Endothelial cell of umbilical vein (primary cell): ENCODE measurements at regions of chr13 and their contacts with region 1.

Region 1: DNA sequence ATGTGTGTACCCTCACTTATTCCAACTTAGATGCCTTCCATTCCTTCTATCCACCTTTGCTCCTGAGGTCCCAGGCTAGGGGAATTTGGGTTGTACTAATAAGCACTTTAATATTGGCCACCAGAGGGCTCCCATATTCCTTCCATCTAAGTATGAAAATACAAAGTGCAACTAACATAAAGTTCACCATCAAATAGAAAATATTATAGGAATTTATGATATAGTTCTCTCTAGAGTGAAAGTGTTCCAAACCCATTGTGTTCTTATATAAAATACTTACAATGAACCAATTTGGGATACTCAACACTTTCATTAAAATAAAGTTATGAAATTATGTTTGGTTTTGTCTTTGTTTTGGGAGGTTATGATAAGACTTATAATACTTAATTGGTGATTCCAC is 62.3 kb downstream of the ITGBL1 start:
- DNase-seq: peak; percentile 80
- H3K4me3 ChIP-seq: no peak overlapping the region
- H3K27ac ChIP-seq: no peak overlapping the region
- H3K4me1 ChIP-seq: peaks cover 37% of the 10 kb centered on the region
- H3K27me3 ChIP-seq: no peaks in the 10 kb centered on the region
- CTCF ChIP-seq: peak; percentile 41 to 44
- POLR2A ChIP-seq: no peak

Region 2: DNA sequence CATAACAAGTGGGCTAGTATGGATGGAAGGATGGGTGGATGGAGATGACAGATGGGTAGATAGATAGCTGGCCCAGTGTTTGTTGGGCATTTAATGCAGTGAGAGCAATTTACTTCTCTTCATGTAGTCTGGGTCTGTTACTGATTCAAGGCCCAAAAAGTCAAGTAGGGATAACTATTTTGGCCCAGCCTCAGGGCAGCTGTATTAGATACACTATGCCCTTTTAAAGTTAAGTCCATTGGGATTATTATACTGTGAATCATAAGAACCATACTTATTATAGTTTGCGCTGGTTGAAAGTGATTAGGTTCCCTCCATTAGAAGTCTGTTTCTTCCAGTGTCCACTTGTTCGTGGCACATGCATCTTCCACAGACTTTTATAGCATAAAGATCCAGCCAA is 57.6 kb before region 1 on chr13:
- CTCF ChIA-PET with region 1: no interaction called
- POLR2A ChIA-PET with region 1: no interaction called
- dilution Hi-C with region 1: no loop called
- intact Hi-C with region 1: no loop called
- DNase-seq: no peak
- H3K4me3 ChIP-seq: no peak overlapping the region
- H3K27ac ChIP-seq: no peak overlapping the region
- H3K4me1 ChIP-seq: peaks cover 40% of the 10 kb centered on the region
- H3K27me3 ChIP-seq: no peaks in the 10 kb centered on the region
- CTCF ChIP-seq: no peak
- POLR2A ChIP-seq: no peak

Region 3: DNA sequence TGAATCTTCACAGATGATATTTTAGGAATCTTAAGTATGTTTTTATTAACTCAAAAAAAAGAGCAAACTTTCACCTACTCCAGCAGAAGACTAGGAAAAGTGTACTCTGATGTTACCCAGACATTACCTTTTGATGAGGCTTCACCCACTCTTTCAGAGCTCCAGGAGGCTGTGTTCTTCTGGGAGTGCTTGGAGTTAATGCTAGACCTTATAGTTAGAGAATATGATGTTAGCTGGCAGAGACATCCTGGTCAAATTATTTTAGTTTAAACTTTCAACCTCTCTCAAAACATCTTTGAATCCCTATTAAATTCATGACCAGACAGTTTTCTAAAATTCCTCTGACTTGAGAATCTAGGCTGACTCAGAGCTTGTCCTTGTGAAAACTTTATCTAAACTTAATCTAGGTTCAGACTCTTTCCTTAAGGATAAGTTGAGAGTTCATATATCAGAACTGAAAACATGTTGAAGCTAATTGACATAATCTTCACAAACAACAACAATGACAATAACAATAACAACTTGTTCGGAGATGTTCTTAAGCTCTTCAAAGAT is 20.5 kb after region 1 on chr13:
- CTCF ChIA-PET with region 1: interaction called, 11 read pairs
- POLR2A ChIA-PET with region 1: no interaction called
- dilution Hi-C with region 1: no loop called
- intact Hi-C with region 1: no loop called
- DNase-seq: no peak
- H3K4me3 ChIP-seq: no peak overlapping the region
- H3K27ac ChIP-seq: no peak overlapping the region
- H3K4me1 ChIP-seq: peaks cover 37% of the 10 kb centered on the region
- H3K27me3 ChIP-seq: no peaks in the 10 kb centered on the region
- CTCF ChIP-seq: no peak
- POLR2A ChIP-seq: no peak

Region 4: DNA sequence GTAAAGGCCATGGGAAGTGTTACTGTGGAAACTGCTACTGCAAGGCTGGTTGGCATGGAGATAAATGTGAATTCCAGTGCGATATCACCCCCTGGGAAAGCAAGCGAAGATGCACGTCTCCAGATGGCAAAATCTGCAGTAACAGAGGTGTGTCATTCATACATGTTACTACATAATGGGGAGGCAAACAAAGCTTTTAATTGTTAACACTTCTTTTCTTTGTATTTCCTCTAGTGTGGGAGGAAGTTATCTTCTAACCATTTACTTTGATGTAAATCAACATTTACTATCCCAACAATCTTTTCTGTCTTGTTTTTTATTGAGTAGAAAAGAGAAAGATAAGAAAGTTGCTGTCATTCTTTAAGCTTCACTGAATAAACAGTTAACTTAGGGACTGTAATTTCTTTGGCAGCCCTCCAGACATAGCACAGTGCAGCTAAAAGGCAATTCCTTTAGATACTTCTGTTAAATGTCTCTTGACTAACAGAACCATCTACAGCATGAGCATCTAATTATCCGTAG is 64.6 kb after region 1 on chr13:
- CTCF ChIA-PET with region 1: interaction called, 6 read pairs
- POLR2A ChIA-PET with region 1: no interaction called
- dilution Hi-C with region 1: no loop called
- intact Hi-C with region 1: loop called (anchors 1 kb)
- DNase-seq: peak; percentile 82
- H3K4me3 ChIP-seq: no peak overlapping the region
- H3K27ac ChIP-seq: peak overlapping the region; percentile 13
- H3K4me1 ChIP-seq: peaks cover 22% of the 10 kb centered on the region
- H3K27me3 ChIP-seq: no peaks in the 10 kb centered on the region
- CTCF ChIP-seq: no peak
- POLR2A ChIP-seq: no peak

Region 5: GRCh38 chr13:101757446-101758039 is 242.8 kb after region 1 on chr13:
- CTCF ChIA-PET with region 1: interaction called, 129 read pairs
- POLR2A ChIA-PET with region 1: no interaction called
- dilution Hi-C with region 1: loop called (anchors 25 kb)
- intact Hi-C with region 1: loop called (anchors 1 kb)
- DNase-seq: peak; percentile 68
- H3K4me3 ChIP-seq: no peak overlapping the region
- H3K27ac ChIP-seq: no peak overlapping the region
- H3K4me1 ChIP-seq: no peaks in the 10 kb centered on the region
- H3K27me3 ChIP-seq: peaks cover 0 to 3% of the 10 kb centered on the region in 2 experiments
- CTCF ChIP-seq: peak; percentile 35 to 37
- POLR2A ChIP-seq: no peak